ENCODE measurements at regions of chr19 and their contacts with region 1.

Region 1: DNA sequence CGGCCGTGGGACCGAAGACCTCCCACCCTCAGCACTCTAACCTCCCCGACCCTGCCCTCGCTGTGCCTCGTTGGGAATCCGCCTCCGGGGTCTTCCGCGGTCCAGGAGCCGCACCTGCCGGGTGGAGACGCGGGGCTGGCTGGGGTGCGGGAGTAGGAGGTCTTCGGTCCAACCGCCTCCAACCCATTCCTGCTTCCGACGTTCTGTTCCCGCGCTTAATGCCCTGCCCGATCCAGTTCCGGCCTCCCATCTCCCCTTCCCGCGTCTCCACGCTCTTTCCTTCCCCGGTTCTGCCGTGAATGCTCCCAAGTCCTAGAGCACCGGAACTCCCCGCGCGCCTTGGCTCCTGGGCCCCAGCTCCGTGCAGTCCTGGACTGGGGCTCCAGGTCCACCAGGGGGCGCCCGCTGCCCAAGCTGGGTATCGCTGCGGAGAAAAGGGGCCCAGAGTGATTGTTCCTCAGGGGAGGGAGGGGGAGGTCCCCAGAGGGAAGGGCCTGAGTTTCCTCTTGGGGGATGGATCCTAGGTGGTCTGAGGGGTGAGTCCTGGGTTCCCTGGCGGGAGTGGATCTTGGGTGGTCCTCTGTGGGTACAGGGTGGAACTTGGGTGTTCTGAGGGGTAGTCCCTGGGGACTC is 14.1 kb upstream of the TNFSF9 start:
- DNase-seq: peak; percentile 93
- H3K4me3 ChIP-seq: peak overlapping the region; percentile 67 to 73 (median 69)
- H3K27ac ChIP-seq: peak overlapping the region; percentile 64 to 79 (median 76)
- H3K4me1 ChIP-seq: peaks cover 7 to 24% (median 16%) of the 10 kb centered on the region in 4 donors
- H3K27me3 ChIP-seq: peaks cover 0 to 11% (median 0%) of the 10 kb centered on the region in 4 donors
- CTCF ChIP-seq: peak; percentile 93 to 100 (median 96)
- EP300 ChIP-seq: no peak
- POLR2A ChIP-seq: no peak

Region 2: GRCh38 chr19:6632002-6632621 is 115.3 kb after region 1 on chr19:
- intact Hi-C with region 1: loop called (anchors 1 kb)
- DNase-seq: no peak
- H3K4me3 ChIP-seq: no peak overlapping the region
- H3K27ac ChIP-seq: no peak overlapping the region
- H3K4me1 ChIP-seq: peaks cover 0 to 6% (median 1%) of the 10 kb centered on the region in 4 donors
- H3K27me3 ChIP-seq: peaks cover 0 to 24% (median 0%) of the 10 kb centered on the region in 4 donors
- CTCF ChIP-seq: peak; percentile 75 to 88 (median 86)
- EP300 ChIP-seq: no peak
- POLR2A ChIP-seq: no peak

Region 3: DNA sequence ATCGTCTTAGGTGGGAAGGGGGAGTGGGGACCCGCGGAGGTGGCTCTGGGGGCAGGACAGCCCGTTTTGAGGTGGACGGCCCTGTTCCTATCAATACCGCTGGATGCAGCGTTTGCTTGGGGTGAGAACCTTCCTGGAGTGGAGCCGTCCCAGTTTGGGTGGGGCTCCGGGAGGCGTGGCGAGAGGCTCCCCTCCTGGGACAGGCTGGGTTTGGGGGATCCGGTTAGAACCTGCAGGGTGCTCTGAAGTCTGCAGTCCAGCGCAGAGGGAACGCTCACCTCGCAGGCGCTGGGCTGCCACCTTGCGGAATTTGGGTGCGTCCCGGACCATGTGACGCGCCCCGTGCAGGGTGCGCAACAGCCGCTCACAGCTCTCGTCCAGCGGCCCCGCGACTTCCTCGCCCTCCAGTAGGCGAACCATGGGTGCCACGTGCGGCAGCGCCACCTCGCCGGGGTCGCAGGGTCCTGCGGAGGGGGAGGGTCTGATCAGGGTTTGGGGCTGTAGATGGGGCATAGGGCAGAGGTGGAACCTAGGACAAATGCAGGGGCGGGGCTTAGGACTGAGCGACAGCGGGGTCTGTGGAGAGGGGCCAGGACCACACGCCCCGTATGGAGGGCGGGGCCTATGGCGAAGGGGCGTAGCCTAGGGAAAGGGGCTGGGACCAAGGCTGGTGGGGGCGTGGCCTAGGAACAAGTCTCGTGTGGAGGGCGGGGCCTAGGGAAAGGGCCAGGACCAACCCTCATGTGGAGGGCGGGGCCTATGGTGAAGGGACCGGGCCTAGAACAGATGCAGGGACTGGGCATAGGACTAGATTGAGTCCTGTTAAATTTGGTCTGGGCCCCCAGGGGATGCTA is 236.6 kb after region 1 on chr19:
- intact Hi-C with region 1: loop called (anchors 5 kb)
- DNase-seq: peak; percentile 96
- H3K4me3 ChIP-seq: peak overlapping the region; percentile 46 to 60 (median 48)
- H3K27ac ChIP-seq: peak overlapping the region; percentile 69 to 80 (median 74)
- H3K4me1 ChIP-seq: peaks cover 11 to 25% (median 19%) of the 10 kb centered on the region in 4 donors
- H3K27me3 ChIP-seq: no peaks in the 10 kb centered on the region
- CTCF ChIP-seq: peak; percentile 57 to 61 (median 59)
- EP300 ChIP-seq: no peak
- POLR2A ChIP-seq: no peak

Region 4: DNA sequence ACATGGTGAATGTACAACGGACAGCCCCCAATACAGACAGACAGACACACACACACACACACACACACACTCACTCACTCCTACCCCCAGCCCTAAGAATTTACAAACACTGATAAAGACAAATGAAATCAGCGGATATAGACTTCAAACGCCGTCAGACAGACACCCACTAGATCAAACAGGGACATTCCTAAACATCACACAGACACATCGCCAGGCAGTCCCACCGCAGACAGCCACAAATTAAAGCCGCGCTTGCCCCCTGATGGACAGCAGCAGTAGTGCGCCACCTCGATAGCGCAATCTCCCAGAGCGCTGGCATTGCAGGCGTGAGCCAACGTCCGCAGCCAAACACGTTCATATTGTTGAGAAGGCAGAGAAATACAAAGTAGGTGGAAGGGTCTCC is 345.9 kb after region 1 on chr19:
- intact Hi-C with region 1: loop called (anchors 2 kb)
- DNase-seq: peak; percentile 93
- H3K4me3 ChIP-seq: peak overlapping the region; percentile 31 to 49 (median 41)
- H3K27ac ChIP-seq: no peak overlapping the region
- H3K4me1 ChIP-seq: peaks cover 7 to 11% (median 9%) of the 10 kb centered on the region in 4 donors
- H3K27me3 ChIP-seq: peaks cover 0 to 31% (median 7%) of the 10 kb centered on the region in 4 donors
- CTCF ChIP-seq: peak; percentile 80 to 91 (median 86)
- EP300 ChIP-seq: no peak
- POLR2A ChIP-seq: no peak

Measured in esophagus muscularis mucosa (tissue), 4 donors.